HCT116 (cell line): ENCODE measurements at regions of chr1 and their contacts with region 1.

Region 1: DNA sequence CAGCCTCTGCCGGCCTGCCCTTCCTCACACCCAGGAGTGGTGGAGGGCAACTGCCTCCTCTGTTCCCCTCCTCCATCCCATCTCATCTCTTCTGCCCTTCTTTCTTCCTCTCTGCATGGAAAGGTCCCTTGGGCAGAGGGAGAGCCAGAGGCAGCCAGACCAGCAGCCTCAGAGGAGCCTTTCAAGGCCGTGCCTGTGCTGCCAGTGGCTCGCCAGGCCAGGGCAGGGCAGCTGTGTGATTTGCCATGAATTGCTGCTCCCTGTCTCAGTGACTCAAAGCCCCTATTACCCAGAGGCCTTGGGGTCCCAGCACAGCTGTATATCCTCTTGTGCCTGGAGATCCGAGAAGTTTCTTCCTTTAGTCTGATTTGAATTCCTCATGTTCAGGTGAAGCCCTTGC is 21.9 kb downstream of the TMCC2 start:
- DNase-seq: no peak
- ATAC-seq: no peak
- H3K4me3 ChIP-seq: no peak overlapping the region
- H3K27ac ChIP-seq: no peak overlapping the region
- H3K4me1 ChIP-seq: 0 out of 4 replicates have a peak, but pooled peaks cover 0 to 4% of the 10 kb centered on the region in 2 experiments
- H3K27me3 ChIP-seq: no peaks in the 10 kb centered on the region
- CTCF ChIP-seq: no peak
- POLR2A ChIP-seq: no peak
- RAD21 ChIP-seq: no peak

Region 2: GRCh38 chr1:205227584-205228006 is 22.1 kb before region 1 on chr1 and contains the start of gene TMCC2:
- CTCF ChIA-PET with region 1: interaction called, 20 read pairs
- POLR2A ChIA-PET with region 1: interaction called, 4 read pairs
- RAD21 ChIA-PET with region 1: interaction called, 4 to 16 read pairs
- intact Hi-C with region 1: no loop called
- DNase-seq: peak; percentile 74
- ATAC-seq: peak; percentile 90
- H3K4me3 ChIP-seq: peak within 1 kb of the TSS; percentile 54 to 67
- H3K27ac ChIP-seq: no peak within 1 kb of the TSS; the same call in 1 of the 2 replicates
- H3K4me1 ChIP-seq: peaks cover 11 to 28% of the 10 kb centered on the region in 2 experiments; a peak in 3 of 4 replicates
- H3K27me3 ChIP-seq: no peaks in the 10 kb centered on the region
- CTCF ChIP-seq: no peak
- POLR2A ChIP-seq: peak; percentile 34
- RAD21 ChIP-seq: no peak
- total RNA-seq, gene TMCC2: 2.7 TPM

Region 3: GRCh38 chr1:205237526-205238484 is 11.8 kb before region 1 on chr1:
- CTCF ChIA-PET with region 1: no interaction called
- POLR2A ChIA-PET with region 1: no interaction called
- RAD21 ChIA-PET with region 1: no interaction called
- intact Hi-C with region 1: no loop called
- DNase-seq: no peak
- ATAC-seq: no peak
- H3K4me3 ChIP-seq: no peak overlapping the region
- H3K27ac ChIP-seq: no peak overlapping the region
- H3K4me1 ChIP-seq: no peaks in the 10 kb centered on the region
- H3K27me3 ChIP-seq: no peaks in the 10 kb centered on the region
- CTCF ChIP-seq: no peak
- POLR2A ChIP-seq: no peak
- RAD21 ChIP-seq: no peak

Region 4: DNA sequence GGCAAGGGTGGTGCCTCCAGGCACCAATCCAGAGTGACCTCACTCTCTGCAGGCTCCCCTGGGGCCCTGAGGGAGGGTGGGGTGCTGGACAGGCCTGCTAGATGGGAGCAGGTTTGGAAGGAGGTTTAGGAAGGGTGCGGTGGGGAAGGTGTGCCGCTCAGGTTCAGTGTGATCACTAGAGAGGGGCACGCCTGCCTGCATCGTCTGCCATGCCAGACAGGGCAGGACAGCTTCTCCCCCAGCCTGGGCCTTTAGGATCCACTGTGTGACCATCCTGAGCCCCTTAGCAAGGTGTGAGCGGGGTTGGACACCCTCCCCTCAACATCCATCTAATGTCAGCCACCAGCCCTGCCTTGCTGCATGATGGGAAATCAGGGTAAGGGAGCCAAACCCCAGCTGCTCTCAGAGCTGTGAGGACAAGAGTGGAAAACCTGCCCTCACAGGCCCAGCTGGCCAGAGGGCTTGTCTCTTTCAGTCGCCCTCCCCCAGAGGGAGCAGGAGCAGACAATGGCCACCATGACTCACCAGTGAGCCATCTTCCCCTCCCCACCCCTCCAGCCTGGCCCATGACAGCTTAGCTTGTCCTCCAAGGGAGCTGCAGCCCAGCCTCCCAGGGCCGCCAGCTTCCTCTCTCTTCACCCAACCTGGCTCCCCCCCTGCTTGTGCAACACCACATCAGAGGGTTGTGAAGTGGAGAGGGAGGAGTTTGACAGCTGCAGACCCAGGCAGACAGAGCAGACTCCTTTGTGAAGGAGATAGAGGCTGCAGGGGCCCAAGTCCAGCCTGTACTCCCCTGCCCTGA is 34.9 kb after region 1 on chr1:
- CTCF ChIA-PET with region 1: no interaction called
- POLR2A ChIA-PET with region 1: no interaction called
- RAD21 ChIA-PET with region 1: no interaction called
- intact Hi-C with region 1: no loop called
- DNase-seq: peak; percentile 75
- ATAC-seq: peak; percentile 95
- H3K4me3 ChIP-seq: peak overlapping the region in 1 of 2 experiments; percentile 27; a peak in 2 of 4 replicates
- H3K27ac ChIP-seq: peak overlapping the region; percentile 2; the same call in 1 of the 2 replicates
- H3K4me1 ChIP-seq: peaks cover 30 to 65% of the 10 kb centered on the region in 2 experiments
- H3K27me3 ChIP-seq: no peaks in the 10 kb centered on the region
- CTCF ChIP-seq: no peak
- POLR2A ChIP-seq: no peak
- RAD21 ChIP-seq: no peak